ENCODE measurements at regions of chr16 and their contacts with region 1.

Region 1: DNA sequence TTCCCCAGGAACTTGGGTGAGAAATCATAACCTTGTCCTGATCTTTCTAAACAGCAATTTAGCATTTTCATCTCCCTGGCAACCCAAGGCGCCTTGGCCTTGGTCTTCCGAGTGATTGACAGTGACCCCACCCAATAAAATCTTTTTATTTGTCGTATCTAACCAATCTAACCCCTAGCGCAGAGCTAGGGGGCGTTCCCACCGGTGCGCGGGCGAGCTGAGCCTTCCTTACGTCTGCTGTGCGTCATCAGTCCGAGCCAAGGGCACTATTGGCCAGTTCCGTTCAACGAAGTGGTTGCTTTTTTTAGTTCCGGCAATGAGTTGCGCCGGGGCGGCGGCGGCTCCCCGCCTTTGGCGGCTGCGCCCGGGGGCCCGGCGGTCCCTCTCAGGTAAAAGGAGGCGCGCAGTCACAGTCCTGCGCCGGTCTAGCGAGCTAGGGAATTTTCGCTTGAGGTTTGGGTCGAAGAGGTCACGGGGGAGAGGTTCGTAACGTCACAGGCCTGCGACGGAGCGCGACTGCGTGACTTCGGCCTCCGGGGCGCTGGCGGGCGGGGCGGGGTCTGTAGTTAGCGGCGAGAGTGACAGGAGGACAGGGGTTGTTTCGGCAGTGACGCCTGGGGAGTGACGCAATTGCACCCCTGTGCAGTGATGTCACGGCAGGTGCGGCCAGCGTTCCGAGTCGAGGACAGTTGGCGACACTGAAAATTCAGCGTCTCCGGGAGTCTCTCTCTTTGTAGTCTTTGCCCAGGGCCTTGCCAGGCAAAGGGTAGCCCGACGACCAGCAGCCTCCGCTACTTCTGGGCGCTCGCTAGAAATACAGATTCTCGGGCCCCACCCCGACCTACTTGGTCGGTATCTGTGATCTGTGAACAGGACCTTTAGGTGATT is at the start of gene COQ7:
- DNase-seq: peak; percentile 95 to 100 (median 99)
- ATAC-seq: peak; percentile 92
- H3K4me3 ChIP-seq: peak within 1 kb of the TSS; percentile 73
- H3K4me3 Mint-ChIP-seq: peak within 1 kb of the TSS; percentile 86 to 97 (median 95)
- H3K27ac ChIP-seq: peak within 1 kb of the TSS; percentile 100
- H3K27ac Mint-ChIP-seq: peak within 1 kb of the TSS; percentile 88 to 100 (median 98)
- H3K4me1 ChIP-seq: peaks cover 5 to 10% of the 10 kb centered on the region in 2 donors
- H3K4me1 Mint-ChIP-seq: peaks cover 0 to 24% (median 15%) of the 10 kb centered on the region in 7 donors
- H3K27me3 ChIP-seq: no peaks in the 10 kb centered on the region
- H3K27me3 Mint-ChIP-seq: peaks cover 0 to 5% (median 0%) of the 10 kb centered on the region in 5 donors
- total RNA-seq, gene COQ7: 16.7 to 20.4 (median 17.5) TPM

Region 2: DNA sequence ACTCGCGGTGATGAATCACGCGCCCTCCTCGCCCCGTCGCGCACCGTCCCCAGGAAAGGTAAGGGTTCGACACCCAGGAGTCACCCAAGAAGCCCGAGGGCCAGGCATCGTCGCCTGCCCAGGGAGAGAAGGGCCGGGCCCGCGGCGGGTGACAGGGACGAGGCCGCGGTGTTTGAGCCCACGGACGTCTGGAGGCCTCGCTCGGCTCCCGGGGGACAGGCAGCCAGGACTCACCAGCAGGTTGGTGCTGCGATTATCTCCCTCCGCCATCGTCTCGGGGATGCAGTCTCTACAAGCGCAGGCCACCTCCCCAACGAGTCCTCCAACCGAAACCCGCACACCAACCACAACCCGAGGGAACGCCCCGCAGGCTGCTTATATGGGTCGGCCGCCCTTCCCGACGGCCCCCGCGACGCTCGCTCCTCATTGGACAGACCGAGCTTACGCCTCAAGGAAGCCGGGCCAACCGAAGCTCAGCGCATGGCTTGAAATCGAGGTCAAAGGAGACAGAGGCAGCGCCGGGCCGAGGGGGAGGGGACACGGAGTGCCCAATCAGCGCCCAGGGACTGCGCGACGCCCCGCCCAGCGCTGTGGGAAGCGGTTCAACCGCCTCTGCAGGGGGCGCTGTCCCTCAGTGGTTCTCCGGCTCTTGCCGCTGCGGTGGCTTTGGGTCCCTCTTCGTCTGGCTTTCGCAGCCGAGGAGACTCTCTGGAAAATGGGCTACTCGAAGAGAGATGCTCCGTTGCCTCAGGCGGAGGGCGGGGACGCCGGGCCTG is 266.2 kb before region 1 on chr16 and contains the start of gene ARL6IP1:
- CTCF ChIA-PET with region 1: no interaction called
- POLR2A ChIA-PET with region 1: interaction called, 6 read pairs
- intact Hi-C with region 1: loop called (anchors 1 kb)
- DNase-seq: peak; percentile 98 to 100 (median 99)
- ATAC-seq: peak; percentile 96
- H3K4me3 ChIP-seq: peak within 1 kb of the TSS; percentile 94
- H3K4me3 Mint-ChIP-seq: peak within 1 kb of the TSS; percentile 88 to 99 (median 96)
- H3K27ac ChIP-seq: peak within 1 kb of the TSS; percentile 86
- H3K27ac Mint-ChIP-seq: peak within 1 kb of the TSS; percentile 88 to 97 (median 95)
- H3K4me1 ChIP-seq: peaks cover 21 to 29% of the 10 kb centered on the region in 2 donors
- H3K4me1 Mint-ChIP-seq: peaks cover 30 to 70% (median 58%) of the 10 kb centered on the region in 7 donors
- H3K27me3 ChIP-seq: no peaks in the 10 kb centered on the region
- H3K27me3 Mint-ChIP-seq: peaks cover 0 to 2% (median 0%) of the 10 kb centered on the region in 5 donors
- total RNA-seq, gene ARL6IP1: 82.9 to 208 (median 94.4) TPM

Region 3: GRCh38 chr16:19086322-19087199 is 19.0 kb after region 1 on chr16:
- CTCF ChIA-PET with region 1: interaction called, 4 read pairs
- POLR2A ChIA-PET with region 1: interaction called, 3 read pairs
- intact Hi-C with region 1: loop called in 1 of 2 experiments (anchors 1 kb)
- DNase-seq: peak; percentile 44 to 90 (median 71)
- ATAC-seq: peak; percentile 96
- H3K4me3 ChIP-seq: peak overlapping the region; percentile 36
- H3K4me3 Mint-ChIP-seq: peak overlapping the region; percentile 40 to 81 (median 69)
- H3K27ac ChIP-seq: no peak overlapping the region
- H3K27ac Mint-ChIP-seq: peak overlapping the region in 2 of 9 donors; percentile 31 to 77
- H3K4me1 ChIP-seq: peaks cover 4 to 10% of the 10 kb centered on the region in 2 donors
- H3K4me1 Mint-ChIP-seq: peaks cover 0 to 7% (median 0%) of the 10 kb centered on the region in 7 donors
- H3K27me3 ChIP-seq: no peaks in the 10 kb centered on the region
- H3K27me3 Mint-ChIP-seq: peaks cover 0 to 14% (median 6%) of the 10 kb centered on the region in 5 donors

Region 4: GRCh38 chr16:19502395-19503131 is 435.0 kb after region 1 on chr16:
- CTCF ChIA-PET with region 1: interaction called, 10 read pairs
- POLR2A ChIA-PET with region 1: no interaction called
- intact Hi-C with region 1: no loop called
- DNase-seq: peak in 8 of 9 donors; percentile 23 to 59 (median 48)
- ATAC-seq: peak; percentile 71
- H3K4me3 ChIP-seq: no peak overlapping the region
- H3K4me3 Mint-ChIP-seq: no peak overlapping the region
- H3K27ac ChIP-seq: no peak overlapping the region
- H3K27ac Mint-ChIP-seq: no peak overlapping the region
- H3K4me1 ChIP-seq: no peaks in the 10 kb centered on the region
- H3K4me1 Mint-ChIP-seq: no peaks in the 10 kb centered on the region
- H3K27me3 ChIP-seq: no peaks in the 10 kb centered on the region
- H3K27me3 Mint-ChIP-seq: no peaks in the 10 kb centered on the region

Region 5: GRCh38 chr16:19886073-19886941 is 818.7 kb after region 1 on chr16:
- CTCF ChIA-PET with region 1: no interaction called
- POLR2A ChIA-PET with region 1: no interaction called
- intact Hi-C with region 1: loop called in 1 of 2 experiments (anchors 1 kb)
- DNase-seq: peak; percentile 66 to 85 (median 78)
- ATAC-seq: peak; percentile 78
- H3K4me3 ChIP-seq: peak overlapping the region; percentile 70
- H3K4me3 Mint-ChIP-seq: peak overlapping the region; percentile 84 to 96 (median 90)
- H3K27ac ChIP-seq: no peak overlapping the region
- H3K27ac Mint-ChIP-seq: peak overlapping the region in 6 of 9 donors; percentile 17 to 72 (median 52)
- H3K4me1 ChIP-seq: peaks cover 9 to 23% of the 10 kb centered on the region in 2 donors
- H3K4me1 Mint-ChIP-seq: peaks cover 12 to 26% (median 22%) of the 10 kb centered on the region in 7 donors
- H3K27me3 ChIP-seq: peaks cover 0 to 12% of the 10 kb centered on the region in 2 donors
- H3K27me3 Mint-ChIP-seq: peaks cover 4 to 39% (median 13%) of the 10 kb centered on the region in 5 donors